ENCODE measurements at regions of chr5 and their contacts with region 1.

Region 1: GRCh38 chr5:161034451-161034850 is 182.4 kb upstream of the ATP10B start:
- DNase-seq: no peak
- H3K4me3 ChIP-seq: no peak overlapping the region
- H3K27ac ChIP-seq: no peak overlapping the region
- H3K4me1 ChIP-seq: no peaks in the 10 kb centered on the region
- H3K27me3 ChIP-seq: no peaks in the 10 kb centered on the region
- CTCF ChIP-seq: no peak

Region 2: GRCh38 chr5:160981914-160982313 is 52.5 kb before region 1 on chr5:
- CTCF ChIA-PET with region 1: no interaction called
- dilution Hi-C with region 1: loop called (anchors 10 kb)
- in situ Hi-C with region 1: no loop called
- intact Hi-C with region 1: no loop called
- DNase-seq: no peak
- H3K4me3 ChIP-seq: no peak overlapping the region
- H3K27ac ChIP-seq: no peak overlapping the region
- H3K4me1 ChIP-seq: no peaks in the 10 kb centered on the region
- H3K27me3 ChIP-seq: no peaks in the 10 kb centered on the region
- CTCF ChIP-seq: no peak

Region 3: GRCh38 chr5:161410640-161411039 is 376.2 kb after region 1 on chr5:
- CTCF ChIA-PET with region 1: no interaction called
- dilution Hi-C with region 1: no loop called
- in situ Hi-C with region 1: no loop called
- intact Hi-C with region 1: no loop called
- DNase-seq: no peak
- H3K4me3 ChIP-seq: no peak overlapping the region
- H3K27ac ChIP-seq: no peak overlapping the region
- H3K4me1 ChIP-seq: no peaks in the 10 kb centered on the region
- H3K27me3 ChIP-seq: no peaks in the 10 kb centered on the region
- CTCF ChIP-seq: no peak

Region 4: GRCh38 chr5:161498531-161498930 is 464.1 kb after region 1 on chr5:
- CTCF ChIA-PET with region 1: no interaction called
- dilution Hi-C with region 1: no loop called
- in situ Hi-C with region 1: no loop called
- intact Hi-C with region 1: no loop called
- DNase-seq: no peak
- H3K4me3 ChIP-seq: no peak overlapping the region
- H3K27ac ChIP-seq: no peak overlapping the region
- H3K4me1 ChIP-seq: no peaks in the 10 kb centered on the region
- H3K27me3 ChIP-seq: no peaks in the 10 kb centered on the region
- CTCF ChIP-seq: no peak

Measured in mammary epithelial cell (primary cell).